Heart left ventricle (tissue), 16 donors: ENCODE measurements at regions of chr19 and their contacts with region 1.

Region 1: GRCh38 chr19:2016041-2016807 is 710 bp upstream of the BTBD2 start:
- DNase-seq: peak in 4 of 5 donors; percentile 85 to 89 (median 86)
- ATAC-seq: peak; percentile 70 to 89 (median 88)
- H3K4me3 ChIP-seq: peak overlapping the region in 10 of 12 donors; percentile 24 to 86 (median 43)
- H3K27ac ChIP-seq: peak overlapping the region in 9 of 12 donors; percentile 8 to 84 (median 54)
- H3K4me1 ChIP-seq: peaks cover 0 to 32% (median 9%) of the 10 kb centered on the region in 12 donors
- H3K27me3 ChIP-seq: no peaks in the 10 kb centered on the region
- CTCF ChIP-seq: no peak
- POLR2A ChIP-seq: no peak

Region 2: GRCh38 chr19:1935484-1936208 is 80.6 kb before region 1 on chr19:
- intact Hi-C with region 1: loop called in 1 of 10 experiments (anchors 5 kb)
- DNase-seq: peak in 2 of 5 donors; percentile 61 to 69
- ATAC-seq: peak in 1 of 4 donors; percentile 8
- H3K4me3 ChIP-seq: no peak overlapping the region
- H3K27ac ChIP-seq: peak overlapping the region in 3 of 12 donors; percentile 4 to 60 (median 25)
- H3K4me1 ChIP-seq: peaks cover 3 to 22% (median 11%) of the 10 kb centered on the region in 12 donors
- H3K27me3 ChIP-seq: no peaks in the 10 kb centered on the region
- CTCF ChIP-seq: no peak
- POLR2A ChIP-seq: no peak

Region 3: GRCh38 chr19:2328401-2329148 is 312.4 kb after region 1 on chr19 and contains the starts of genes LSM7 and SPPL2B:
- intact Hi-C with region 1: loop called in 1 of 10 experiments (anchors 5 kb)
- DNase-seq: peak; percentile 91 to 96 (median 93)
- ATAC-seq: peak; percentile 82 to 97 (median 94)
- H3K4me3 ChIP-seq: peak within 1 kb of the TSS; percentile 73 to 100 (median 98)
- H3K27ac ChIP-seq: peak within 1 kb of the TSS in 11 of 12 donors; percentile 56 to 90 (median 81)
- H3K4me1 ChIP-seq: peaks cover 5 to 63% (median 45%) of the 10 kb centered on the region in 12 donors
- H3K27me3 ChIP-seq: no peaks in the 10 kb centered on the region
- CTCF ChIP-seq: no peak
- POLR2A ChIP-seq: peak in 1 of 2 donors; percentile 89
- total RNA-seq, gene LSM7: 33.8 to 79.1 (median 41.0) TPM
- total RNA-seq, gene SPPL2B: 17.6 to 30.9 (median 21.6) TPM